ENCODE measurements at regions of chr16 and their contacts with region 1.

Region 1: GRCh38 chr16:56700195-56700594 is 17.9 kb downstream of the MT1X start:
- DNase-seq: no peak
- H3K4me3 ChIP-seq: no peak overlapping the region
- H3K27ac ChIP-seq: no peak overlapping the region
- H3K4me1 ChIP-seq: no peaks in the 10 kb centered on the region
- H3K27me3 ChIP-seq: no peaks in the 10 kb centered on the region
- CTCF ChIP-seq: no peak
- POLR2A ChIP-seq: no peak

Region 2: DNA sequence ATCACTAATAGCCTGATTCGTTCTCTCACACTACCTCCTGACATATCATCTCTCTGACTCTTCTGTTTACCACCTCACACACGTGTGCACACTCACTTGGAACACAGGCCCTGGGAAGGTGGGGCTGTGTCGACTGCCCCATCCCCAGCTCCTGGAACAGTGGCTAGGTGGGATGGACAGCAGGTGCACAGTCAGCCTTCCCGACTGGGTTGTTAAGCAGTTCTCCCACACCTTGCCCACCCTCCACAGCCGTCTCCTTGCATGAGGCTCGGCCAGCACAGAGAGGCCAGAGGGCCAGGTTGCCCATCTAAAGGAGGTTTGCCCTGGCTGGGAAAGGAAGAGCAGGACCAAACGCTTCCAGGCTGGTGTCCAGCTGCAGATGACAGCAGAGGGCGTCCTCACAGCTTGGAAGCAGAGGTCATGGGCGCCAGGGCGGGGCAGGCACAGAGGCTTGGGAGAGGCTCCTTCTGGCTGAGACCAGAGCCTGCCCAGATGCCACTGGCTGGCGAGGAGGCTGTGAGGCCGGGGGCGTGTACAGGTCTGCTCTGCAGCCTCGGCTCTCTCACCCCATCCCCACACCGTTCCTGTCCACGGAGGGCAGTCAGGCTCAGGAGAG is 367.6 kb before region 1 on chr16:
- CTCF ChIA-PET with region 1: interaction called, 4 read pairs
- POLR2A ChIA-PET with region 1: interaction called, 8 read pairs
- dilution Hi-C with region 1: no loop called
- intact Hi-C with region 1: loop called (anchors 2 kb)
- DNase-seq: peak; percentile 35
- H3K4me3 ChIP-seq: no peak overlapping the region
- H3K27ac ChIP-seq: no peak overlapping the region
- H3K4me1 ChIP-seq: no peaks in the 10 kb centered on the region
- H3K27me3 ChIP-seq: no peaks in the 10 kb centered on the region
- CTCF ChIP-seq: peak in 1 of 2 donors; percentile 60
- POLR2A ChIP-seq: no peak

Region 3: GRCh38 chr16:56513972-56514371 is 186.2 kb before region 1 on chr16:
- CTCF ChIA-PET with region 1: interaction called, 54 read pairs
- POLR2A ChIA-PET with region 1: no interaction called
- dilution Hi-C with region 1: no loop called
- intact Hi-C with region 1: loop called (anchors 1 kb)
- DNase-seq: peak; percentile 79
- H3K4me3 ChIP-seq: no peak overlapping the region
- H3K27ac ChIP-seq: no peak overlapping the region
- H3K4me1 ChIP-seq: peaks cover 9% of the 10 kb centered on the region
- H3K27me3 ChIP-seq: no peaks in the 10 kb centered on the region
- CTCF ChIP-seq: peak; percentile 56 to 57
- POLR2A ChIP-seq: no peak

Region 4: GRCh38 chr16:56600398-56600999 is 99.7 kb before region 1 on chr16:
- CTCF ChIA-PET with region 1: interaction called, 118 read pairs
- POLR2A ChIA-PET with region 1: no interaction called
- dilution Hi-C with region 1: no loop called
- intact Hi-C with region 1: loop called (anchors 1 kb)
- DNase-seq: peak; percentile 54
- H3K4me3 ChIP-seq: no peak overlapping the region
- H3K27ac ChIP-seq: no peak overlapping the region
- H3K4me1 ChIP-seq: peaks cover 6% of the 10 kb centered on the region
- H3K27me3 ChIP-seq: peaks cover 2 to 3% of the 10 kb centered on the region in 2 experiments
- CTCF ChIP-seq: peak; percentile 65 to 74
- POLR2A ChIP-seq: no peak

Region 5: DNA sequence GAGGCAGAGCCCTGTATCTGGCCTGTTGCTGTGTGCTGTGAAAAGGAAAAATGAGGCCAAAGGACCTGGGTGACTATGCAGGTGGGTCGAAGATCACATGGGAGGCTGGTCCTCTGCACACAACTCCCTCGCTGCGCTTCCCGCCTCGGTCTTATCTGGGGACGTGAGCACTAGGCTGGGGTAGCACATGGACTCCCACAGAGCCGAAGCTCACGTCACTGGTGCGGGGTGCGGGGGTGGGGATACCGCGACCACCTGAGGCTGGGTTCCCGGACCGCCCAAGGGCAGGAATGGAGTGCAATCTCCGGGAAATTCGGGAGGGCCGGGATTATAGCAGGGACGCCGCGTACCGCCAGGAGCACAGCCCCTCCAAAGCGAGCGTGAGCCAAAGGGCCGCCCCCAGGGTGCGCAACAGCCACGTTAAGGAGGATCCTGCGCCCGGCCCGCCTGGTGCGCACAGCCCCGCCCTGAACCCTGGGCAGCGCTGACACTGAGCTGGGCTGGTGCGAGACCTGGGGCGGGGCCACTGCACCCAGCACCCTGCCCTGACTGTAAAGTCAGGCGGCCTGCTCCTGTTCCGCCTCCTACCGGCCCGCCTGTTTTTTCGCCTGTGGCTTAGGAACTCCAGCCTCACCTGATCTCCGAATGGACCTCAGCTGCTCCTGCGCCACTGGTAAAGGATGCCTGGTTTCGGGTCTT is 57.0 kb before region 1 on chr16:
- CTCF ChIA-PET with region 1: interaction called, 19 read pairs
- POLR2A ChIA-PET with region 1: no interaction called
- dilution Hi-C with region 1: no loop called
- intact Hi-C with region 1: no loop called
- DNase-seq: no peak
- H3K4me3 ChIP-seq: peak overlapping the region in 2 of 3 experiments; percentile 0 to 9
- H3K27ac ChIP-seq: no peak overlapping the region
- H3K4me1 ChIP-seq: peaks cover 10% of the 10 kb centered on the region
- H3K27me3 ChIP-seq: peaks cover 36 to 54% of the 10 kb centered on the region in 2 experiments
- CTCF ChIP-seq: no peak
- POLR2A ChIP-seq: no peak

Region 6: GRCh38 chr16:56716761-56717160 is 16.6 kb after region 1 on chr16:
- CTCF ChIA-PET with region 1: interaction called, 20 read pairs
- POLR2A ChIA-PET with region 1: no interaction called
- dilution Hi-C with region 1: no loop called
- intact Hi-C with region 1: no loop called
- DNase-seq: no peak
- H3K4me3 ChIP-seq: no peak overlapping the region
- H3K27ac ChIP-seq: no peak overlapping the region
- H3K4me1 ChIP-seq: no peaks in the 10 kb centered on the region
- H3K27me3 ChIP-seq: peaks cover 0 to 6% of the 10 kb centered on the region in 2 experiments
- CTCF ChIP-seq: no peak
- POLR2A ChIP-seq: no peak